T-cell (primary cell): ENCODE measurements at regions of chr9 and their contacts with region 1.

Region 1: GRCh38 chr9:94178927-94179326 is 80.2 kb upstream of the ZNF169 start:
- DNase-seq: no peak
- ATAC-seq: no peak
- H3K4me3 ChIP-seq: no peak overlapping the region
- H3K4me3 Mint-ChIP-seq: no peak overlapping the region
- H3K27ac ChIP-seq: no peak overlapping the region
- H3K27ac Mint-ChIP-seq: peak overlapping the region; percentile 50 to 62
- H3K4me1 ChIP-seq: peaks cover 10 to 16% of the 10 kb centered on the region in 2 experiments
- H3K4me1 Mint-ChIP-seq: peaks cover 63 to 76% (median 68%) of the 10 kb centered on the region in 3 donors
- H3K27me3 ChIP-seq: no peaks in the 10 kb centered on the region
- H3K27me3 Mint-ChIP-seq: no peaks in the 10 kb centered on the region

Region 2: GRCh38 chr9:93592643-93593021 is 586.3 kb before region 1 on chr9:
- CTCF ChIA-PET with region 1: interaction called in 1 of 2 experiments, 11 read pairs
- POLR2A ChIA-PET with region 1: no interaction called
- DNase-seq: no peak
- ATAC-seq: no peak
- H3K4me3 ChIP-seq: no peak overlapping the region
- H3K4me3 Mint-ChIP-seq: no peak overlapping the region
- H3K27ac ChIP-seq: no peak overlapping the region
- H3K27ac Mint-ChIP-seq: no peak overlapping the region
- H3K4me1 ChIP-seq: peaks cover 0 to 36% of the 10 kb centered on the region in 2 experiments
- H3K4me1 Mint-ChIP-seq: peaks cover 71 to 81% (median 75%) of the 10 kb centered on the region in 3 donors
- H3K27me3 ChIP-seq: no peaks in the 10 kb centered on the region
- H3K27me3 Mint-ChIP-seq: no peaks in the 10 kb centered on the region

Region 3: DNA sequence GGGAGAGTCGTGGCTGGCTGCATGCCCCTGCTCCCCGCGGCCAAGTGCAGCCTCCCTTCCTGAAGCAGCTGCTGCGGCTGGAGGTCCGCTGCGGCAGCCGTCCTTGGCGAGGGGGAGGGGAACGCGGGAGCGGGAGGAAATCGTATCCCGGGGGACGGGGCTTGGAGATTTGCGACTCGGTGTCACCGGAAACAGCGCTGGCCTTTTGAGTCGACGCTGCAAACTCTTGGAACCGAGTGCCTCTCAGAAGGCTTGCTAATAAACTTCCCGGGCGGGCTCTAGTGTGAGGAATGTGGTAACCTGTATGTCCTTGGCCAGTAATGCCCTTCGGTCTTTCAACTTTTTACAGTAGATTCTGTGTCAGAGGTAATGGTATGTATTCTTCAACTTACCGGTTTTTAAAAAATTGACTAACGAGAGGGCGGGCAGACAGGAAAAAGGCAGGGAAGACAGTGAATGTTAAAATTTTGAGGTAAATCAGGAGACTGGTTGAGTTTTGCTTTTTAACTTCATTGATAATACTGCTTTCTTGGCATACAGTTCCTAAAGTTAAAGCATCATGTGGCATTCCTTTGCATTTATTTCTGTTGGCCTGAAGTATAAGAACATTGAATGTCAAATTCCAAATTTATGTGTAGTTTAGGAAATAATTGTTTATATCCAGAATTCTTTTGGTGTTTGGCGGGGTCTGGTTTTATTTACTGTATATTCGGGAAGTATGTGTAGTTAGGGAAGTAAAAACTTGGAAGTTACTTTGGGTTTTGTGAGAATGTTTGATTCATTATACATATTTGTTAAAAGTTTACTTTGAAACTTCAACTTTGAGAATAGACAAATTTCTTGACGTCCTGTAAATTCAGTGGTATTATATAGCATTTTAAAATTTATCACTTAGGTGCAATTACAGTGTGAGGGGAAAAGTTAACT is 11.7 kb before region 1 on chr9:
- CTCF ChIA-PET with region 1: interaction called in 1 of 2 experiments, 3 read pairs
- POLR2A ChIA-PET with region 1: interaction called in 1 of 2 experiments, 10 read pairs
- DNase-seq: peak in 2 of 35 experiments; percentile 8 to 9
- ATAC-seq: no peak
- H3K4me3 ChIP-seq: peak overlapping the region; percentile 88 to 92
- H3K4me3 Mint-ChIP-seq: peak overlapping the region; percentile 78 to 87 (median 83)
- H3K27ac ChIP-seq: peak overlapping the region; percentile 85
- H3K27ac Mint-ChIP-seq: peak overlapping the region; percentile 20 to 86
- H3K4me1 ChIP-seq: peaks cover 21 to 45% of the 10 kb centered on the region in 2 experiments
- H3K4me1 Mint-ChIP-seq: peaks cover 59 to 64% (median 59%) of the 10 kb centered on the region in 3 donors
- H3K27me3 ChIP-seq: no peaks in the 10 kb centered on the region
- H3K27me3 Mint-ChIP-seq: no peaks in the 10 kb centered on the region

Region 4: DNA sequence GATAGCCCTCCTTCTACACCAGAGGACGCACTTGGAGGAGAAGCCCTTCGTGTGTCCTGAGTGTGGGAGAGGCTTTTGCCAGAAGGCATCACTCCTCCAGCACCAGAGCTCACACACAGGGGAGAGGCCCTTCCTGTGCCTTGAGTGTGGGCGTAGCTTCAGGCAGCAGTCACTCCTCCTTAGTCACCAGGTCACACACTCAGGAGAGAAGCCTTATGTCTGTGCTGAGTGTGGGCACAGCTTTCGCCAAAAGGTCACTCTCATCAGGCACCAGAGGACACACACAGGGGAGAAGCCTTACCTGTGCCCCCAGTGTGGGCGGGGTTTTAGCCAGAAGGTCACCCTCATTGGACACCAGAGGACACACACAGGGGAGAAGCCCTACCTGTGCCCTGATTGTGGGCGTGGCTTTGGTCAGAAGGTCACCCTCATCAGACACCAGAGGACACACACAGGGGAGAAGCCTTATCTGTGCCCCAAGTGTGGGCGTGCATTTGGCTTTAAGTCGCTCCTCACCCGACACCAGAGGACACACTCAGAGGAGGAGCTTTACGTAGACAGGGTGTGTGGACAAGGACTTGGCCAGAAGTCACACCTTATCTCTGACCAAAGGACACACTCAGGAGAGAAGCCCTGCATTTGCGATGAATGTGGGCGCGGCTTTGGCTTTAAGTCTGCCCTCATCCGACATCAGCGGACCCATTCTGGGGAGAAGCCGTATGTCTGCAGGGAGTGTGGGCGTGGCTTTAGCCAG is 121.8 kb after region 1 on chr9:
- CTCF ChIA-PET with region 1: no interaction called
- POLR2A ChIA-PET with region 1: no interaction called
- DNase-seq: no peak
- ATAC-seq: no peak
- H3K4me3 ChIP-seq: no peak overlapping the region
- H3K4me3 Mint-ChIP-seq: no peak overlapping the region
- H3K27ac ChIP-seq: no peak overlapping the region
- H3K27ac Mint-ChIP-seq: no peak overlapping the region
- H3K4me1 ChIP-seq: no peaks in the 10 kb centered on the region
- H3K4me1 Mint-ChIP-seq: no peaks in the 10 kb centered on the region
- H3K27me3 ChIP-seq: no peaks in the 10 kb centered on the region
- H3K27me3 Mint-ChIP-seq: no peaks in the 10 kb centered on the region